HEK293T (cell line): ENCODE measurements at regions of chr13 and their contacts with region 1.

Region 1: DNA sequence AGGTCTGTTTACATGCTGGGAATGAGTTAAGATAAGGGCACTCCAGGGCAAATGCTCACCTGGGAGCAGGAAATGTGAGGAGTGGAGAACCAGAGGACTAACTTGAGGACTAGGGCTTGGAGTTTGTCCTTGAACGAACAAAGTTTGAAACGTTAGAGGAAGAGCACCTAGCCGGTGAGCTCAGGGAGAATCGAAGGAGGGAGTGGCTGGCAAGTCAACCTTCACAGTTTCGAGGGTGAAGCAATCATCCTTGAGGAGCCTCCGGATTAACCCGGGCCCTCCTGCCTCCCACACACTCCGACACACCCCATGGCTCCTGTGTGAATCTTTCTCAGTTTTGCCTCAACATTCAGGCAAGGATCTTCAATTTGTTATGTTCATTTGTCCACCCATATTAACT is 58.6 kb downstream of the LMO7 start:
- DNase-seq: no peak

Region 2: GRCh38 chr13:75647126-75647784 is 47.5 kb before region 1 on chr13:
- CTCF ChIA-PET with region 1: no interaction called
- POLR2A ChIA-PET with region 1: no interaction called
- DNase-seq: no peak

Region 3: GRCh38 chr13:75704579-75705320 is 10.0 kb after region 1 on chr13:
- CTCF ChIA-PET with region 1: interaction called, 25 read pairs
- POLR2A ChIA-PET with region 1: no interaction called
- DNase-seq: no peak

Region 4: DNA sequence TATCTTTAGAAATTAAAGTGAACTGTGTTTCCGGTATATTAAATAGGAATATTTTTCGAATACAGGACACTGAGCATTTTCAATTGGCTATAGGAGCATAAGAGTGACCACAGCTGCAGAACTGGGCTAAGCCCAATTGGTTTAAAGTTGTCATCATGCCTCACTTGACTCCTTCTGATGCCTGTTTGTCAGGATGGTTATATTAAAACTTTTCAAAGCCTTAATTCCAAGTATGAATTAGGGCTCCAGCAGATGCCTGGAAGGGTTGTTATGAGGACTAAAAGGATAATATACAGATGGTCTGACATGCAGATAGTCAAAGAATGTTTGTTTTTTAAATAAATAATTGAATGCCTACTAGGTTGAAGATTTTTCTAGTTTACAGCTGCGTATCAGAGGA is 41.5 kb after region 1 on chr13:
- CTCF ChIA-PET with region 1: interaction called, 10 read pairs
- POLR2A ChIA-PET with region 1: no interaction called
- DNase-seq: no peak

Region 5: DNA sequence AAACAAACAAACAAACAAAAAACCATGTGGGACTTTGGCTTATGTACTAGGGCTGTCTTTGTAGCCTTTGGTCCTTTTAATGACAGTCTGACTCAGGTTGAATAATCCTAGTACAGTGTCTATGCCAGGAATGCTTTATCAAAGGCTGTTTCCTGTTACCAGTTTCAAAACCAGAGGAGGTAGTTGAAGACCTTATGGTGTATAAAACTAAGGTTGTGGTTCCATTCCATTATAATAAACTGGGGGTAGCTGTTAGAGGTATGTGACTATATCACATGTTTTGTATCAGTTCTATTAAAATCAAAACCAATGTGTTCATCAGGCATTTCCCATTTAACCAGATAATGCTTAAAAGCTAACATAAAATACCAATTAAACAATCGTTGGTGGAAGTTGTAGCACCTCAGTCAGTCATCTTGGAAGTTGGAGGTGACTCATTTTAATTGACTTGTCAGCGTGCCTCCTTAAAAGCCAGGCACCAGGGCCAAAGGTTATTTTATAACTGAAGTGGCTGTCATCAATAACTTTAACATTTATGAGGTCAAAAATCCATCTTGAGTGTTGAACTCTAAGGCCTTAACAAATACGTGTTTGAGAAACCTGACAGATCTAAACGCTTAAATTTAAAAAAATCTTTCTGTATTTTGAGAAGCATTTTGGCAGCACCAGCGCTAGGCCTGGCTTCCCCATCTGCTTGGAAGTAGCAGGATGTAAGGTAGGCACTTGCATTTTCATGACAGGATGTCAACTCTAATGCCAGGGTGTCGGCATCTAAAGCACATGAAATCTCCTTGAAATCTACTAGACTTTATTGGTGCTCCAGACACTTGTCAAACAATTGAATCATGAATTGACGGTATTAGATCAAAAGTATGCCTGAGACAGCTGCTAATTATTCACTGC is 103.9 kb after region 1 on chr13:
- CTCF ChIA-PET with region 1: interaction called, 18 read pairs
- POLR2A ChIA-PET with region 1: no interaction called
- DNase-seq: no peak